Activated T-helper 2 cell treated with anti-CD3 and anti-CD28 coated beads, Interferon-gamma antibody, Interleukin-2, Interleukin-4, amounts not matched to agents 10 μg/mL and 5 μg/mL and 100 μg/mL, durations not matched to agents 14 hours and 24 hours and 36 hours (primary cell): ENCODE measurements at regions of chr3 and their contacts with region 1.

Region 1: GRCh38 chr3:42831321-42831713 is 22.1 kb downstream of the ACKR2 start:
- DNase-seq: peak; percentile 64
- H3K4me3 Mint-ChIP-seq: no peak overlapping the region
- H3K27ac Mint-ChIP-seq: no peak overlapping the region
- H3K4me1 Mint-ChIP-seq: peaks cover 10% of the 10 kb centered on the region
- H3K27me3 Mint-ChIP-seq: peaks cover 20% of the 10 kb centered on the region

Region 2: DNA sequence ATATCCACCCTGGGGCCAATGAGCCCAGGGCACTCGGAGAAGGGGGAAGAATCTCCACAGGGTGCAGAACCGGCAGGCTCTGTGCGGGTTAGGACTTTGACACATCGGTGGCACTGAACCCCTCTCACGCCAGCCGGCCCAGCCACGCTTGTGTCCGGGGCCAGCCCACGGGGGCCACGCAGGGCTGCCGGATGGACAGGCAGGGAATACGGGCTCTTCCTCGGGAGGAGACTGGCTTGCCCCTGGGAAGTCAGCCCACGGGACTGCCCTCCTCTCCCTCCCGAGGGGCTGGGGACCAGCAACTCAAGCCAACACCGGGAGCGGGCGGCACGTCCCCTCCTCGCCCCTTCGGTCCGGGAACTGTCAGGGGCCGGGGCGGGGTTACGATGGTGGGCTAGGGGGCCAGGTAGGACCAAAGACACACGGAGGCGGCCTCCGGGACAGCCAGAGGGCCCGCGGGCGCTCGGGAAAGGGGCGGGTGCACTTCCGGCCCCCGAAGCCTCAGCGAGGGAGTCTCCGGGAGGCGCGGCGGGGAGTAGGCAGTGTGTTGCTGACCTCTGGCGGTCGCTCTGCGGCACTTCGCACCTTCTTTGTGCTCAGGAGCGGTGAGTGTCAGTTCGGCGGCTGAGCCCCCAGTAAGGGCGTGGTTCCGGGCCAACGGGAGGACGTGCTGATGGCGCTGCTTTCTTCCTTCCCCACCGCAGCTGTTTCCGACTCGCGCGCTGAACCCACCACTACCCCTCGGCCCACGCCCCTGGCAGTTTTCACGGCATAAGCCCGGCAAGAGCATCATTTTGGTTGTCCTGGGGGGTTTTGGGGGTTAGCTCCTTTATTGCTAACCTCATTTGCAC is 49.5 kb after region 1 on chr3:
- intact Hi-C with region 1: loop called (anchors 1 kb)
- DNase-seq: peak; percentile 85
- H3K4me3 Mint-ChIP-seq: peak overlapping the region; percentile 83
- H3K27ac Mint-ChIP-seq: peak overlapping the region; percentile 77
- H3K4me1 Mint-ChIP-seq: peaks cover 10% of the 10 kb centered on the region
- H3K27me3 Mint-ChIP-seq: peaks cover 13% of the 10 kb centered on the region